Activated CD4-positive, alpha-beta T cell treated with anti-CD3 and anti-CD28 coated beads, Interleukin-2, amount 10 ng/mL, durations not matched to agents 24 days and 14 days (primary cell): ENCODE measurements at regions of chr1 and their contacts with region 1.

Region 1: GRCh38 chr1:26431979-26432695 is at the start of gene DHDDS:
- DNase-seq: peak; percentile 100
- H3K4me3 Mint-ChIP-seq: peak within 1 kb of the TSS; percentile 98
- H3K27ac Mint-ChIP-seq: peak within 1 kb of the TSS; percentile 95
- H3K4me1 Mint-ChIP-seq: peaks cover 17% of the 10 kb centered on the region
- H3K27me3 Mint-ChIP-seq: peaks cover 5% of the 10 kb centered on the region
- total RNA-seq, gene DHDDS: 57.0 and 60.2 TPM in 2 replicates

Region 2: GRCh38 chr1:25895365-25895993 is 536.7 kb before region 1 on chr1:
- intact Hi-C with region 1: no loop called
- DNase-seq: peak; percentile 97
- H3K4me3 Mint-ChIP-seq: no peak overlapping the region
- H3K27ac Mint-ChIP-seq: peak overlapping the region; percentile 64
- H3K4me1 Mint-ChIP-seq: peaks cover 24% of the 10 kb centered on the region
- H3K27me3 Mint-ChIP-seq: no peaks in the 10 kb centered on the region

Region 3: DNA sequence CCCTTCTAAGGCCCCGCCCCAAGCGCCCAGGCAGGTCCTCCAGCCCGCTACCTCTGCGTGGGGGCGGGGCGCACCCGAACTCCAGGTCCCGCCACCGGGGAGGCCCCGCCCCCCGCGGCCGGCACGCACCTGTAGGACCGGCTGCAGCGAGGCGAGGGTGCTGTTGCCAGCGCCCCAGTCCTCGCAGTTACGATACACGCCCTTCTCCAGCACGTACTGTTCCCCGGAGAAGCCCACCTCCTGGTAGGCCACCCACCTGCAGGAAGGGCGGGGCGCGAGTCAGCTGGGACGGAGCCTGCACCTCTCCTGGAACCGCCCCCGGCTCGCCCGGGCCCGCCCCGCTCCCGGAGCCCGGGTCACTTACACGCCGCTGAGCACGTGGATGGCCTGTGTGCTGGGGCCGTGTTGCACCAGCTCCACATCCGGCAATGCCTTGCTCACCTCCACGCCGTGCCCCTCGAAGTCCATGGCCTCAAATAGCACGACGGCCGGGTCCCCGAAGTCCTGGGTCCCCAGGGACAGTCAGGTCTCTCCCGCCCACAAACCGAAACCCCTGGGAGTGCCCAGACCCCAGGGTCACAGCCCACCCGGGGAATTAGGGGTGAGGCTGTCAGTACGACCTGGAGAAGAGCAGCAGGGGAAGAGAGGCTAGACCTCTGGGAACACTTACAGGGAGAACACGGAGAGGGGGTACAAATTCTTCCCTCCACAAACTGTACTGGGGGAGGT is 95.5 kb before region 1 on chr1:
- intact Hi-C with region 1: no loop called
- DNase-seq: peak; percentile 93
- H3K4me3 Mint-ChIP-seq: peak overlapping the region; percentile 92
- H3K27ac Mint-ChIP-seq: no peak overlapping the region
- H3K4me1 Mint-ChIP-seq: peaks cover 3% of the 10 kb centered on the region
- H3K27me3 Mint-ChIP-seq: peaks cover 8% of the 10 kb centered on the region

Region 4: DNA sequence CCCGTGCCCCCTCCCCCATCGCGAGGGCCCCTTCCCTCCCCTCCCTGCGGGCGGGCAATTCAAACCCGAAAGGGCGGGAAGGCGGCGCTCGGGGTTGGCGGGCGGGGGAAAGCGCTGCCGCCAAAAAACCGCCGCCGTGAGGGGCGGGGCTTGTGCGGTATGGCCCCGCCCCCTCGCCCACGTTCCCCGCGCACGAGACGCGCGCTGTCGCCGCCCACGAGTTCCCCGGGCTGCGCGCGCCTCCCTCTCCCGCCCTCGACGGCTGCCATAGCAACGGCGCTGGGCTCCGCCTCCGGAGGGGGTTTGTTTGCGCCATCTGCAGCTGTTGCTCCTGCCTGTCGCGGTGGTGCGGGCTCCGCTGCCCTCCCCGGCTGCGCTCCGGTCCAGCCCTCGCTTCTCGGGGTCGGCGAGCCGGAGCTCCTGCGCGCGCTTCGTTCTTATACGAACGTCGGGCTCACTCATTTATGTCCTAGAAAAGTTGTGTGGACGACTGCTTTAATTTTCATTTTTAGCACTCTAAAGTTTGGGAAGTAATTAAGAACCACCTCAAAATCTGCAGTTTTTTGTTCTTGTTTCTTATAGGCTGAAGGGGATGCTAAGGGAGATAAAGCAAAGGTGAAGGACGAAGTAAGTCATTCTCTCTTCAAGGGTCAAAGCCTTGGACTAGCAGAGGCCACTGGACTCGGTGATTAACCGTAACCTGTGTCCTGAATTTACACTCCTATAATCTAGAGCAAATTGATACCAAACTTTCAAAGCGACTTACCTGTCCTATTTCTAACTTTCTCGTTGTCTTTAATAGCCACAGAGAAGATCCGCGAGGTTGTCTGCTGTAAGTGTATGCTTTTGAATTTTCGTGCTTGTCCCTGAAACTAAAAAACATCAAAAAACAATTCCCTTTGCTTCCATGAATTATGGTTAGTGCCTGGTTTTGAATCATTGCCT is 41.0 kb after region 1 on chr1:
- intact Hi-C with region 1: loop called (anchors 1 kb)
- DNase-seq: peak; percentile 99
- H3K4me3 Mint-ChIP-seq: peak overlapping the region; percentile 94
- H3K27ac Mint-ChIP-seq: peak overlapping the region; percentile 84
- H3K4me1 Mint-ChIP-seq: peaks cover 48% of the 10 kb centered on the region
- H3K27me3 Mint-ChIP-seq: peaks cover 2% of the 10 kb centered on the region